Transverse colon (tissue), 4 donors: ENCODE measurements at regions of chr16 and their contacts with region 1.

Region 1: GRCh38 chr16:12557786-12558185 is 245.9 kb downstream of the CPPED1 start:
- DNase-seq: no peak
- H3K4me3 ChIP-seq: no peak overlapping the region
- H3K27ac ChIP-seq: no peak overlapping the region
- H3K4me1 ChIP-seq: no peaks in the 10 kb centered on the region
- H3K27me3 ChIP-seq: no peaks in the 10 kb centered on the region
- CTCF ChIP-seq: no peak
- EP300 ChIP-seq: no peak
- POLR2A ChIP-seq: no peak

Region 2: DNA sequence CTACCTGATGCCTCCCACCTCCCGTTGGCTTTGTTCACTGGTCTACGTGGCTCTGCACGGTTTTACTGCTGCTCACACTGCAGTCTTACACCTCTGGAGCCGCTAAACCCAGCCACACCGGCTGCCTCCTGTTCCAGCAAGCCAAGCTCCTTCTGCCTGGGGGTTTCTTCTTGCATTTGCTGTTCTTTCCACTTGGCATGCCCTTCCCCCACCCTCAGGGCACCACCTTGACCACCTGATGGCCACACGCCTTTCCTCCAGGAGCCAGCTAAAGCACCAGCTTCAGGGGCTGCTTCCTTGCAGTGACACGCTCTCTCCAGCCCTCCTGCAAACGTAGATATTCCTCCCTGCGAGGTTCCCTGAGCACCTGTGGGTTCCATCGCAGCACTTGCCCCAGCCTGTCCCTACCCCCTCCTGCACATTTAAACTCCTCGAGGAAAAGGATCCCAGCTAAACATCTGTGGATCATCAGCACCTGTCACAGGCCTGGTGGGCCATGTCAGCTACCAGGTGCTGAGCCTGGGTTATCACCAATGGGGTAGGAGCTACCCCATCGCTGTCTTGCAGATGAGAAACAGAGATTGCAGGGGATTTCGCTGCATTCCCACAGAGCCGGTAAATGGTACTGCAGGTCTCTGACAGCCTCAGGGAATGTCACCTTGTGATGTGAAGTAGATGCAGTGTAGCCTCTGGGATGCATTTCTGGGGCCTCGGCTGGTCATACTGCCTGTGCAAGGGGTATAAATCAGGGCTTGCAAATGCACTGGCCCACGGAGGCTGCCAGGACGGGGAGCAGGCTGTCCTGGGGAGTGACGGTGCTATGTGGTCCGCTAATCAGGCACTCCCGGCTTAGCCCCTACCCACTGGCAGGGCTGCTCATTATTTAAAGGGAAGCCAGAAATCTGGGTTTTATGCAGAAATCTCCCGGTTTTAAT is 39.3 kb before region 1 on chr16:
- in situ Hi-C with region 1: no loop called
- intact Hi-C with region 1: loop called (anchors 2 kb)
- DNase-seq: no peak
- H3K4me3 ChIP-seq: no peak overlapping the region
- H3K27ac ChIP-seq: no peak overlapping the region
- H3K4me1 ChIP-seq: no peaks in the 10 kb centered on the region
- H3K27me3 ChIP-seq: no peaks in the 10 kb centered on the region
- CTCF ChIP-seq: no peak
- EP300 ChIP-seq: no peak
- POLR2A ChIP-seq: no peak

Region 3: GRCh38 chr16:13254998-13255614 is 697.3 kb after region 1 on chr16:
- in situ Hi-C with region 1: no loop called
- intact Hi-C with region 1: no loop called
- DNase-seq: no peak
- H3K4me3 ChIP-seq: no peak overlapping the region
- H3K27ac ChIP-seq: no peak overlapping the region
- H3K4me1 ChIP-seq: no peaks in the 10 kb centered on the region
- H3K27me3 ChIP-seq: no peaks in the 10 kb centered on the region
- CTCF ChIP-seq: no peak
- EP300 ChIP-seq: no peak
- POLR2A ChIP-seq: no peak